Naive thymus-derived CD4-positive, alpha-beta T cell (primary cell): ENCODE measurements at regions of chr1 and their contacts with region 1.

Region 1: DNA sequence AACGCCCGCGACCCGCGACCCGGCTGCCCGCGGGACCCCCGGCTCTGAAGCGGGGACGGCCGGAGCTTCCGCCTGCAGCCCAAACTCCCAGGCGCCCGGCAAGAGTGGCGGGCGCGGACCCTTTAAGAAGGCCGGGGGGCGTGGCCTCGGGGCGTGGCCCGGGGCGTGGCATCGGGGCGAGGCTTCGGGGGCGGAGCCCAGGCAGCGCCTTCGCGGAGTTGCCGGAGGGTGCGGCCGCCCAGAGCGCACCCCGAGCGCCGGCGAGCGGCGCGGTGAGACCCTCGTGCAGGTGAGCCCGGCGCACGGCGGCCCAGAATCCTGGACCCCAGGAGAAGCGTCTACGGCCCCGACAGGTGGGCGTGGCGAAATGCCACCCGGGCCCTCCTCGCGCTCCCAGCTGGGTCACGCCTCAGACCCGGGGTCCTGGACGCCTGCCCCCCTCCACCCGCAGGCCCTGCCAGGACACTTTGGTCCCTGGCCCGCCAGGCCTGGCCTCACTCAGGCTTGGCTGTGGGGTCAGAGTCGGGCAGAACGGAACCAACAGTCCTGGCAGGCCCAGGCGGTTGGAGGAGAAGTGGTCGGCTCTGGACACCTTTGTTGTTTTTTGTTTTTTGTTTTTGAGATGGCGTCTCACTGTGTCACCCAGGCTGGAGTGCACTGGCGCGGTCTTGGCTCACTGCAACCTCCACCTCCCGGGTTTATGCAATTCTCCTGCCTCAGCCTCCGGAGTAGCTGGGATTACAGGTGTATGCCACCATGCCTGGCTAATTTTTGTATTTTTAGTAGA is 14.4 kb downstream of the RNF223 start:
- DNase-seq: peak; percentile 80 to 94 (median 87)
- ATAC-seq: peak; percentile 92
- H3K4me3 ChIP-seq: peak overlapping the region; percentile 43
- H3K4me3 Mint-ChIP-seq: peak overlapping the region in 8 of 10 donors; percentile 29 to 84 (median 52)
- H3K27ac ChIP-seq: no peak overlapping the region
- H3K27ac Mint-ChIP-seq: peak overlapping the region in 1 of 9 donors; percentile 38
- H3K4me1 ChIP-seq: peaks cover 4 to 22% of the 10 kb centered on the region in 2 donors
- H3K4me1 Mint-ChIP-seq: peaks cover 0 to 19% (median 5%) of the 10 kb centered on the region in 7 donors
- H3K27me3 ChIP-seq: peaks cover 3 to 16% of the 10 kb centered on the region in 2 donors
- H3K27me3 Mint-ChIP-seq: peaks cover 7 to 35% (median 13%) of the 10 kb centered on the region in 5 donors

Region 2: GRCh38 chr1:983799-984473 is 75.8 kb before region 1 on chr1:
- CTCF ChIA-PET with region 1: interaction called, 38 read pairs
- POLR2A ChIA-PET with region 1: no interaction called
- intact Hi-C with region 1: loop called in 1 of 2 experiments (anchors 1 kb)
- DNase-seq: peak in 7 of 9 donors; percentile 47 to 71 (median 62)
- ATAC-seq: peak; percentile 85
- H3K4me3 ChIP-seq: no peak overlapping the region
- H3K4me3 Mint-ChIP-seq: no peak overlapping the region
- H3K27ac ChIP-seq: no peak overlapping the region
- H3K27ac Mint-ChIP-seq: no peak overlapping the region
- H3K4me1 ChIP-seq: no peaks in the 10 kb centered on the region
- H3K4me1 Mint-ChIP-seq: peaks cover 0 to 2% (median 0%) of the 10 kb centered on the region in 7 donors
- H3K27me3 ChIP-seq: no peaks in the 10 kb centered on the region
- H3K27me3 Mint-ChIP-seq: peaks cover 7 to 38% (median 26%) of the 10 kb centered on the region in 5 donors

Region 3: DNA sequence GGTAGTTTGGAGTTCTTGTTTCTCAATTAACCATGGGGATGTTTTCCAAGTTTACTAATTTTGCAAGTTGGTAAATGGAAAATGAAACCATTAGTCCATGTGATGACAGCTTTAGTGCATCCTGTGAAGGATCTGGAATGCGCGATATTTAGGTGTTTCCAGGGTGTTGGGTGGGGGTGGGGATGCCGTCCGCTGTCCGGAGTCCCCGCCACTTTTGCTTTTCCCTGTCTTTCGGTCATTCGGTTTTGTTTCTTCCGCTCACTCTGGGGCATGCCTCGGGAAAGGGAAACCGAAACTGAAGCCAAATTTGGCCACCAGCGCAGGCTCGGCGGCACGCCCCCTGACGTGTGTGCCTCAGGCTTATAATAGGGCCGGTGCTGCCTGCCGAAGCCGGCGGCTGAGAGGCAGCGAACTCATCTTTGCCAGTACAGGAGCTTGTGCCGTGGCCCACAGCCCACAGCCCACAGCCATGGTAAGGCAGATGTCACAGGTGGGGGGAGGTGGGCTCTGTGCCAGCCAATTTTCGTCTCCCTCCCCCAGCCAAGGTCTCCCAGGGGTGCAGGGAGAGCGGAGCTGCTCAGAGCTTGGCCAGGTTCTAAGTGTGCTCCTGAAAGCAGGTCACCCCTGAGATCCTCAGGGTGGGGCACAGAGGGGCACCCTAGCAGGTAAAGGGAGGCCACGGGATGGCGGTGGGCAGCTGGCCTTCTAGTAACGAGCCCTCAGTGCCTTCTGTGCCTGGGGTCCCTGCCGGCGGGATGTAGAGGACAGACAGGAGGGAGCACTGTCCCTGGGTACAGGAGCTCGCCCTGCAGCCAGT is 46.4 kb before region 1 on chr1 and contains the start of gene ISG15:
- CTCF ChIA-PET with region 1: interaction called, 4 read pairs
- POLR2A ChIA-PET with region 1: interaction called, 6 read pairs
- intact Hi-C with region 1: loop called in 1 of 2 experiments (anchors 2 kb)
- DNase-seq: peak; percentile 73 to 90 (median 85)
- ATAC-seq: peak; percentile 98
- H3K4me3 ChIP-seq: peak within 1 kb of the TSS; percentile 95
- H3K4me3 Mint-ChIP-seq: peak within 1 kb of the TSS; percentile 89 to 100 (median 96)
- H3K27ac ChIP-seq: peak within 1 kb of the TSS; percentile 83
- H3K27ac Mint-ChIP-seq: peak within 1 kb of the TSS; percentile 96 to 100 (median 99)
- H3K4me1 ChIP-seq: peaks cover 13 to 18% of the 10 kb centered on the region in 2 donors
- H3K4me1 Mint-ChIP-seq: peaks cover 19 to 35% (median 29%) of the 10 kb centered on the region in 7 donors
- H3K27me3 ChIP-seq: no peaks in the 10 kb centered on the region
- H3K27me3 Mint-ChIP-seq: peaks cover 0 to 4% (median 1%) of the 10 kb centered on the region in 5 donors
- total RNA-seq, gene ISG15: 17.4 to 227 (median 25.4) TPM

Region 4: DNA sequence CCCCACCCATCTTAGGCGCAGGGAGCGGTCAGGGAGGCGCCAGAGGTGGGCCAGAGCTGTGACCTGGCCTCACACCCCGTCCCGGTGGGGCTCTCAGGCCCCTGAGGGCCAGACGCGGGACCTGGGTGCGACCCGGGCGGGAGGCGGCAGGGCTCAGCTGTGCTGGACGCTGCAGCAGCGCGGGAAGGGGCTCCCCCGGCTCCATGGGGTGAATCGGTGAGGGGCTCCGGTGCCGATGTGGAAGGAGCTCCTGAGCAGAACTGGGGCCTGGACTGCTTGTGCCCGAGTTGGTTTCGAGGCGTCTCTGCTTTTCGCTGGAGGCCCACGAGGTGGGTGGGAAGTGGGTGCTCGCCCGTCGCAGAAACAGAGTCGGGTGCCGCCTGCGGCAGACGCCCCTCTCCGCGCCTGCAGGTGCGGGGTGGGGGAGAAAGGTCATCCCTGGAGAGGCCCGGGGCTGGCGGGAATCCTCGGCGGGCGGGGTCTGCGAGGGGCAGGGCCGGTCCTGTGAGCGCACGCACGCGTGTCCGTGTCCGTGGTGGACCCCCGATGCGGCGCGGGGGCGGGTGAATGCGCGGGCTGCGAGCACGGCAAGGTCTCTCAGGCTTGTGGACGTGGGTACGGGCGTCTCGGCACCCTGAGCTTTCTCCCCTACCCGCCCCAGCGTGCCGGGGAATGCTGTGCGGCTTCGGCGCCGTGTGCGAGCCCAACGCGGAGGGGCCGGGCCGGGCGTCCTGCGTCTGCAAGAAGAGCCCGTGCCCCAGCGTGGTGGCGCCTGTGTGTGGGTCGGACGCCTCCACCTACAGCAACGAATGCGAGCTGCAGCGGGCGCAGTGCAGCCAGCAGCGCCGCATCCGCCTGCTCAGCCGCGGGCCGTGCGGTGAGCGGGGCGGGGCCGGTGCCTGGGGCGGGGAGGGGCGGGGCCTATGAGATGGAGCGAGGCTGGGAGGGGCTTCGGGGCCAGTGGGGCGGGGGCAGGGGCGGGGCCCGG is 19.4 kb before region 1 on chr1:
- CTCF ChIA-PET with region 1: no interaction called
- POLR2A ChIA-PET with region 1: interaction called, 4 read pairs
- intact Hi-C with region 1: loop called (anchors 1 kb)
- DNase-seq: peak; percentile 69 to 84 (median 81)
- ATAC-seq: peak; percentile 93
- H3K4me3 ChIP-seq: peak overlapping the region; percentile 52
- H3K4me3 Mint-ChIP-seq: peak overlapping the region; percentile 71 to 86 (median 80)
- H3K27ac ChIP-seq: peak overlapping the region; percentile 35
- H3K27ac Mint-ChIP-seq: peak overlapping the region in 7 of 9 donors; percentile 25 to 56 (median 41)
- H3K4me1 ChIP-seq: peaks cover 6 to 14% of the 10 kb centered on the region in 2 donors
- H3K4me1 Mint-ChIP-seq: peaks cover 5 to 18% (median 15%) of the 10 kb centered on the region in 7 donors
- H3K27me3 ChIP-seq: no peaks in the 10 kb centered on the region
- H3K27me3 Mint-ChIP-seq: peaks cover 3 to 27% (median 5%) of the 10 kb centered on the region in 5 donors